IMR-90 (cell line): ENCODE measurements at regions of chr6 and their contacts with region 1.

Region 1: DNA sequence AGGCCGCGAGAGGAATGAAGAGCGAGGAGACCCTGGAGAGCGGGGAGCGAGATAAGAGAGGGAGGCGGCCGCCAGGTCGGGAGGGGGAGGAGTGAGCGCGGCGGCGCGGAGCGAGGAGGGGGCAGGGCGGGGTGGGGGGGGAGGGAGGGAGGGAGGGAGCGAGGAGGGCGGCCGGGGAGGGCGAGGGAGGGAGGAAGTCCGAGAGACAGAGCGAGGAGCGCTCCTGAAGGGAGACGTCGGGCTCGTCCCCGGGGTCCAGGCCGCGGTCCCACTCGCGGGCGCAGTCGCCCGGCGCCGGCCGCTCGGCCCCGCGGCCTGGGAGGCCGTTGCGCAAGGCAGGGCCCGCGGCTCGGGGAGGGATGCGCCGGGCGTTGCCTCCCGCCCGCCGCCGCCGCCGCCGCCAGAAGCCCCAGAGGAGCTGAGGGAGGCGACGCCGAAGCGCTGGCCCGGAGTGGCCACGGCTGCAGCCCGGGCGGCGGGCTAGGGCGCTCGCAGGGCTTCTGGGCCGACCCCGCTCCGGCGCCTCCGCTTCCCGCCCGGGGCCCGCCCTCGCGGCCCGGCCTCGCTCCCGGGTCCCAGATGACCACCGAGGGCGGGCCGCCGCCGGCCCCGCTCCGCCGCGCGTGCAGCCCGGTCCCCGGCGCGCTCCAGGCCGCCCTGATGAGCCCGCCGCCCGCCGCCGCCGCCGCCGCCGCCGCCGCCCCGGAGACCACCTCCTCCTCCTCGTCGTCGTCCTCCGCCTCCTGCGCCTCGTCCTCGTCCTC is at the start of gene FOXF2:
- DNase-seq: no peak
- ATAC-seq: peak; percentile 32
- H3K4me3 ChIP-seq: peak within 1 kb of the TSS; percentile 58
- H3K27ac ChIP-seq: peak within 1 kb of the TSS; percentile 98
- H3K4me1 ChIP-seq: peaks cover 11% of the 10 kb centered on the region
- H3K27me3 ChIP-seq: no peaks in the 10 kb centered on the region; the same call in 1 of the 2 replicates
- CTCF ChIP-seq: no peak
- POLR2A ChIP-seq: no peak
- RAD21 ChIP-seq: no peak
- total RNA-seq, gene FOXF2: 2.5 TPM in 2 replicates

Region 2: GRCh38 chr6:946546-946945 is 443.0 kb before region 1 on chr6:
- CTCF ChIA-PET with region 1: no interaction called
- POLR2A ChIA-PET with region 1: no interaction called
- dilution Hi-C with region 1: no loop called
- in situ Hi-C with region 1: no loop called
- intact Hi-C with region 1: no loop called
- DNase-seq: peak; percentile 36
- ATAC-seq: no peak
- H3K4me3 ChIP-seq: no peak overlapping the region
- H3K27ac ChIP-seq: no peak overlapping the region
- H3K4me1 ChIP-seq: no peaks in the 10 kb centered on the region
- H3K27me3 ChIP-seq: peaks cover 3% of the 10 kb centered on the region; the same call in 1 of the 2 replicates
- CTCF ChIP-seq: no peak
- POLR2A ChIP-seq: no peak
- RAD21 ChIP-seq: no peak

Region 3: DNA sequence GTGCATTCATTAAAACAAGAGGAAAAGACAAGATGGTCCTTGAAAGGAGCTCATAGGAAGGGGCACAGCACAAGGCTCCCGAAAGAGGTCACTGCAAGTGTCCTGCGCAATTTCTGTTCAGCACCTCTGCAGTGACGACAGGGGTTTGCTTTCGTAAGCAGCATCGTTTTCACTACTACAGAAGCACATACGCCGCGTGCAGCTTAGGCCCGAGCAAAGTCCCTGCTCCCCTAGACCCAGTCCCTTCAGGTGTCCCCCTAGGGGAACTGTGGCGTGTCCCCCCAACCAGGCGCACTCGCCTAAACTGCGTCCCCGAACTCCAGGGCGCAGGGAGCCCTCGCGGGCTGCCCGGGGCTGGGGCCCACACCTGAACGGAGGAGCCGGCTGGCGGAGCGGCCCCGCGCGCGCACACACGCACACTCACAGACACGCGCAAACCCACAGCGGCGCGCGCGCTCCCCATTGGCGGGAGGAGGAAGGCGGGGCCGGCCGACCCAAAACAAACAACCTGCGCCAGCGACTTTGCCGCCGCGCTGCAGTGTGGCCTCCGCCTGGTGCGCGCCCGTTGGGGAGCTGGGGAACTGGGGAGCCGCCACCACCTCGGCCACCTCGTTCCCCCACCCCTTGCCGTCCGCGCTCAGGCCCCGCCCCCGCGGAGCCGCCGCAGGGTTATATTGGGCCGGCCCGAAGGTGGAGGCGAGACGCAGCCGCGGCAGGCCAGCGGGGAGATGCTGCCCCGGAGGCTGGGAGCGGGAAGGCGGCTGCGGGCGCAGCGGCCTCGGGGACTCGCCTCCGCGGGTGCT is 78.0 kb before region 1 on chr6 and contains the start of gene FOXQ1:
- CTCF ChIA-PET with region 1: no interaction called
- POLR2A ChIA-PET with region 1: no interaction called
- dilution Hi-C with region 1: no loop called
- in situ Hi-C with region 1: no loop called
- intact Hi-C with region 1: loop called (anchors 5 kb)
- DNase-seq: peak; percentile 40
- ATAC-seq: peak; percentile 52
- H3K4me3 ChIP-seq: peak within 1 kb of the TSS; percentile 37
- H3K27ac ChIP-seq: no peak within 1 kb of the TSS
- H3K4me1 ChIP-seq: no peaks in the 10 kb centered on the region
- H3K27me3 ChIP-seq: peaks cover 71% of the 10 kb centered on the region
- CTCF ChIP-seq: no peak
- POLR2A ChIP-seq: no peak
- RAD21 ChIP-seq: no peak
- total RNA-seq, gene FOXQ1: not detected in 2 replicates

Region 4: GRCh38 chr6:1709234-1709641 is 319.7 kb after region 1 on chr6:
- CTCF ChIA-PET with region 1: no interaction called
- POLR2A ChIA-PET with region 1: no interaction called
- dilution Hi-C with region 1: no loop called
- in situ Hi-C with region 1: no loop called
- intact Hi-C with region 1: no loop called
- DNase-seq: no peak
- ATAC-seq: no peak
- H3K4me3 ChIP-seq: no peak overlapping the region
- H3K27ac ChIP-seq: no peak overlapping the region
- H3K4me1 ChIP-seq: no peaks in the 10 kb centered on the region
- H3K27me3 ChIP-seq: no peaks in the 10 kb centered on the region
- CTCF ChIP-seq: no peak
- POLR2A ChIP-seq: no peak
- RAD21 ChIP-seq: no peak